ENCODE measurements at regions of chr18 and their contacts with region 1.

Region 1: DNA sequence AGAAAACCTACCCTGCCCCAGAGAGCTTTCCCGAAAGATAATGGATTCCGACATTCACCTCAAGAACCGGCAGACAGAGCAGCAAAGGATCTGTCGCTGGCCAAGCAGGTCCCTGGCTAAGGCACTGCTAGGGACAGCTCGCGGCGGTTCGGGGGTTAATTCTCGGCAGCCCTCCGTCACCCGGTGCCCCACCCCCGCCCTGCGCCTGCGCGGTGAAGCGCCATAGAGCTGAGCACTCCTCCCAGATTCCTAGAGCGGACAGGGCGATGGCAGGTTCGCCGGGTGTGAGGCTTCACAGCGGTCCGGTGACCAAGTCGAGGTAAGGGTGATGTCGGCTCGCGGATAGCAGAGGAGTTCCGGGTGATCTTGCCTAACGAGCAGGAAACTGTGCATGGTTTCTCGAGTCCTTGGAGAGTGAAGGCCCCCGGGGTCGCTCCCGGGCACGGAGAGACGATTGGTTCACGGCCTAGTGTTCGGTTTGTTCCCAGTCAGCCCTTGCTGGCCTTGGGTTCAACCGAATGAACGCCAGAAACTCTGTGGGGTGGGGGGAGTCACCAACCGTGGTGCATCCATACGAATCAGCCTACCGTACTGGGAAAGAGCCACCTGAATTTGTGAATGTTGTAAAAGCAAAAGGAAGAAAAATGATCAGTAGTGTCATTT is at the start of gene ZSCAN30:
- DNase-seq: peak; percentile 92
- ATAC-seq: peak; percentile 97
- H3K4me3 Mint-ChIP-seq: peak within 1 kb of the TSS; percentile 100
- H3K27ac Mint-ChIP-seq: peak within 1 kb of the TSS; percentile 99
- H3K4me1 Mint-ChIP-seq: peaks cover 51% of the 10 kb centered on the region
- H3K27me3 Mint-ChIP-seq: peaks cover 2% of the 10 kb centered on the region
- CTCF ChIP-seq: no peak
- total RNA-seq, gene ZSCAN30: 21.2 and 23.8 TPM in 2 replicates

Region 2: DNA sequence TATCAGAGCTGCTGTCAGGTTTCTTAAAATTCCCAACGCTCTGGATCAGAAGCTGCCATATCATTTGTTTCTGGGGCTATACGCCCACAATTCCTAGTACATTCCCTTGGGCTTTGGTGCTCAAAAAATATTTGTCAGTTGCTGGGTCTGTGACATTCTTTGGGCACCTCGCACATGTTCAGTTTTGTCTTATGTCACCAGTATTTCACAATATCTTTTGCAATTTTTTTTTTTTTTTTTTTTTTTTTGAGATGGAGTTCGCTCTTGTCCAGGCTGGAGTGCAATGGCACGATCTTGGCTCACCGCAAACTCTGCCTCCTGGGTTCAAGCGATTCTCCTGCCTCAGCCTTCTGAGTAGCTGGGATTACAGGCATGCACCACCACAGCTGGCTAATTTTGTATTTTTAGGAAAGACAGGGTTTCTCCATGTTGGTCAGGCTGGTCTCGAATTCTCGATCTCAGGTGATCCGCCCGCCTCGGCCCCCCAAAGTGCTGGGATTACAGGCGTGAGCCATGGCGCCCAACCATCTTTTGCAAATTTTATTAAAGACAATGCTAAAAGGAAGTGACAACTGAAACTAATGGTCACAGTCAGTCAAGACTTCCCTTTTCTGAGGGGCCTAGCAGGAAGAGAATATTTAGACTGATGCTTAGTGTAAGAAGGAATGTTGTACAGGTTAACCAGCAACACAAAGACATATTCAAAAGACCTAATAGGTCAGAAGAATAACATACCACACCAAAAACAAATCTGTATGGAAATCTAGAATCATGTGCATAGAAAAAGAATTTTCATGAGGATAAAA is 42.6 kb before region 1 on chr18:
- CTCF ChIA-PET with region 1: no interaction called
- POLR2A ChIA-PET with region 1: interaction called, 8 read pairs
- intact Hi-C with region 1: loop called (anchors 2 kb)
- DNase-seq: no peak
- ATAC-seq: peak; percentile 94
- H3K4me3 Mint-ChIP-seq: peak overlapping the region; percentile 60
- H3K27ac Mint-ChIP-seq: peak overlapping the region; percentile 90
- H3K4me1 Mint-ChIP-seq: peaks cover 43% of the 10 kb centered on the region
- H3K27me3 Mint-ChIP-seq: no peaks in the 10 kb centered on the region
- CTCF ChIP-seq: no peak

Measured in activated B cell treated with CpG ODN at 0.5 μM for 24 hours (primary cell).